PC-3 (cell line): ENCODE measurements at regions of chr10 and their contacts with region 1.

Region 1: GRCh38 chr10:71314028-71314693 is 4.9 kb upstream of the SLC29A3 start:
- DNase-seq: peak; percentile 50
- ATAC-seq: peak; percentile 39
- H3K4me3 ChIP-seq: no peak overlapping the region
- H3K27ac ChIP-seq: no peak overlapping the region
- H3K4me1 ChIP-seq: no peaks in the 10 kb centered on the region; the same call in 1 of the 2 replicates
- H3K27me3 ChIP-seq: no peaks in the 10 kb centered on the region
- CTCF ChIP-seq: peak; percentile 62

Region 2: GRCh38 chr10:71212318-71213126 is 101.6 kb before region 1 on chr10 and contains the start of gene UNC5B:
- CTCF ChIA-PET with region 1: no interaction called
- POLR2A ChIA-PET with region 1: no interaction called
- intact Hi-C with region 1: no loop called
- DNase-seq: peak; percentile 62
- ATAC-seq: peak; percentile 63
- H3K4me3 ChIP-seq: peak within 1 kb of the TSS; percentile 66
- H3K27ac ChIP-seq: no peak within 1 kb of the TSS
- H3K4me1 ChIP-seq: peaks cover 9% of the 10 kb centered on the region; the same call in 1 of the 2 replicates
- H3K27me3 ChIP-seq: peaks cover 40% of the 10 kb centered on the region
- CTCF ChIP-seq: no peak
- total RNA-seq, gene UNC5B: 0.26 and 0.46 TPM in 2 replicates

Region 3: GRCh38 chr10:71443676-71444075 is 129.5 kb after region 1 on chr10:
- CTCF ChIA-PET with region 1: no interaction called
- POLR2A ChIA-PET with region 1: interaction called, 11 read pairs
- intact Hi-C with region 1: no loop called
- DNase-seq: no peak
- ATAC-seq: no peak
- H3K4me3 ChIP-seq: no peak overlapping the region
- H3K27ac ChIP-seq: no peak overlapping the region
- H3K4me1 ChIP-seq: no peaks in the 10 kb centered on the region
- H3K27me3 ChIP-seq: no peaks in the 10 kb centered on the region
- CTCF ChIP-seq: no peak

Region 4: GRCh38 chr10:71569775-71570588 is 255.8 kb after region 1 on chr10:
- CTCF ChIA-PET with region 1: no interaction called
- POLR2A ChIA-PET with region 1: no interaction called
- intact Hi-C with region 1: loop called (anchors 1 kb)
- DNase-seq: peak; percentile 69
- ATAC-seq: 0 out of 2 replicates have a peak, but pooled peaks have one; percentile 53
- H3K4me3 ChIP-seq: no peak overlapping the region
- H3K27ac ChIP-seq: no peak overlapping the region
- H3K4me1 ChIP-seq: no peaks in the 10 kb centered on the region
- H3K27me3 ChIP-seq: no peaks in the 10 kb centered on the region
- CTCF ChIP-seq: peak; percentile 78